Vagina (tissue), 2 donors: ENCODE measurements at regions of chr3 and their contacts with region 1.

Region 1: GRCh38 chr3:123335007-123335670 is 113.8 kb downstream of the ADCY5 start:
- DNase-seq: no peak
- H3K4me3 ChIP-seq: no peak overlapping the region
- H3K27ac ChIP-seq: no peak overlapping the region
- H3K4me1 ChIP-seq: no peaks in the 10 kb centered on the region
- H3K27me3 ChIP-seq: no peaks in the 10 kb centered on the region
- CTCF ChIP-seq: no peak
- POLR2A ChIP-seq: no peak

Region 2: GRCh38 chr3:123297627-123297899 is 37.6 kb before region 1 on chr3:
- intact Hi-C with region 1: no loop called
- DNase-seq: no peak
- H3K4me3 ChIP-seq: no peak overlapping the region
- H3K27ac ChIP-seq: no peak overlapping the region
- H3K4me1 ChIP-seq: no peaks in the 10 kb centered on the region
- H3K27me3 ChIP-seq: no peaks in the 10 kb centered on the region
- CTCF ChIP-seq: no peak
- POLR2A ChIP-seq: no peak

Region 3: GRCh38 chr3:123459881-123460280 is 124.7 kb after region 1 on chr3:
- intact Hi-C with region 1: no loop called
- DNase-seq: no peak
- H3K4me3 ChIP-seq: no peak overlapping the region
- H3K27ac ChIP-seq: no peak overlapping the region
- H3K4me1 ChIP-seq: no peaks in the 10 kb centered on the region
- H3K27me3 ChIP-seq: no peaks in the 10 kb centered on the region
- CTCF ChIP-seq: no peak
- POLR2A ChIP-seq: no peak

Region 4: GRCh38 chr3:124928333-124929202 is 1593.4 kb after region 1 on chr3:
- intact Hi-C with region 1: loop called (anchors 5 kb)
- DNase-seq: no peak
- H3K4me3 ChIP-seq: no peak overlapping the region
- H3K27ac ChIP-seq: no peak overlapping the region
- H3K4me1 ChIP-seq: no peaks in the 10 kb centered on the region
- H3K27me3 ChIP-seq: no peaks in the 10 kb centered on the region
- CTCF ChIP-seq: peak; percentile 60 to 67 (median 67)
- POLR2A ChIP-seq: no peak